GM12878 (cell line): ENCODE measurements at regions of chr12 and their contacts with region 1.

Region 1: DNA sequence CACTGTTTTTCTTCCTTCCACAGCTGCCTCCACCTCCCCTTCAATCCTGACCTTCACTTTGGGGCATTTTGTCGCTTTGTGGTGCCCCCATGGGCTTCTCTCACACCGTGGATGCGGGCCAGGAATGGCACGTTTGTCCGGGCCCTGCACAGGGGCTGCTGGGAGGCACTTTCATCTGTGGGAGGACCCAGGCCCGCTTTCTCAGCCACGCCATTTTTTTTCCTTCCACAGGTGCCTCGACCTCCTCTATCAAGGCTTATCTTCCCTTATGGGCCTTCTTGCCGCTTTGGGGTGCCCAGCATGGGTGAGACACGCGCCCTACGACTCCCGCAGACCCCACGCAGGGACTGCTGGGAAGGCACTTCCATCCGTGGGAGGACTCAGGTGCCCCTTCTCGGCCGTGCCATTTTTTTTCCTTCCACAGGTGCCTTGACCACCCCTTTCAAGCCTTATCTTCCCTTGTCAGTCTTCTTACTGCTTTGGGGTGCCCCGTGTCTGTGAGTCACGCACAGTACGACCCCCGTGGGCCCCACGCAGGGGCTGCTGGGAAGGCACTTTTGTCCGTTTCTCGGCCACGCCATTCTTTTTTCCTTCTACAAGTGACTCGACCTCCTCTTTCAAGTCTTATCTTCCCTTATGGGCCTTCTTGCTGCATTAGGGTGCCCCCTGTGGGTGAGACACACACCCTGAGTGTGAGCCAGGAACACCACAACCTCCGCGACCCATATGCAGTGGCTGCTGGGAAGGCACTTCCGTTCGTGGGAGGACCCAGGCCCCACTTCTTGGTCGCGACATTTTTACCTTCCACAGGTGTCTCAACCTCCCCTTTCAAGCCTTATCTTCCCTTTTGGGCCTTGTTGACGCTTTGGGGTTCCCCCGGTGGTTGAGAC is 270.7 kb downstream of the ALG10 start:
- DNase-seq: no peak
- ATAC-seq: no peak
- H3K4me3 ChIP-seq: no peak overlapping the region
- H3K27ac ChIP-seq: no peak overlapping the region
- H3K4me1 ChIP-seq: no peaks in the 10 kb centered on the region
- H3K27me3 ChIP-seq: no peaks in the 10 kb centered on the region
- CTCF ChIP-seq: no peak
- EP300 ChIP-seq: no peak
- POLR2A ChIP-seq: no peak
- RAD21 ChIP-seq: no peak

Region 2: DNA sequence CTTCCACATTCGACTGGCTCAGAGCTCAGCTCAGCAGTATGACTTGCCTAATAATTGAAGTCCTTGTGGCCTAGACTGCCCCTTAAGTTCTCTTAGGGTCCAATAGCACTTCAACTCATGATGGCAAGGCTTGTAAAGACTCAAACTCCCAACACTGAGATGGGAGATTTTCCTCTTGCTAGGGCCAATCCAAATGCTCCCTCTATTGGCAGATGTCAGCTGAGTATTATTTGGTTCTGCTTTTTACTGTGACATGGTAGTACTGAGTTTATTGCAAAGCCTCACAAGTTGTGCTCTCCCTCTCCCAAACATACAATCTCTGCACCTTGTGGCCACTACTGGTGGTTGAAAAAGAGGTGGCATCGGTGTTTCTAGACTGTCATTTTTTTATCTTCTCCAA is 106.5 kb before region 1 on chr12:
- CTCF ChIA-PET with region 1: no interaction called
- POLR2A ChIA-PET with region 1: no interaction called
- RAD21 ChIA-PET with region 1: no interaction called
- SMC1A ChIA-PET with region 1: no interaction called
- in situ Hi-C with region 1: loop called (anchors 25 kb)
- intact Hi-C with region 1: no loop called
- DNase-seq: no peak
- ATAC-seq: no peak
- H3K4me3 ChIP-seq: no peak overlapping the region
- H3K27ac ChIP-seq: no peak overlapping the region
- H3K4me1 ChIP-seq: no peaks in the 10 kb centered on the region
- H3K27me3 ChIP-seq: no peaks in the 10 kb centered on the region
- CTCF ChIP-seq: no peak
- EP300 ChIP-seq: no peak
- POLR2A ChIP-seq: no peak
- RAD21 ChIP-seq: no peak

Region 3: GRCh38 chr12:34303091-34303870 is 10.3 kb after region 1 on chr12:
- CTCF ChIA-PET with region 1: no interaction called
- POLR2A ChIA-PET with region 1: no interaction called
- RAD21 ChIA-PET with region 1: no interaction called
- SMC1A ChIA-PET with region 1: no interaction called
- in situ Hi-C with region 1: no loop called
- intact Hi-C with region 1: no loop called
- DNase-seq: no peak
- ATAC-seq: no peak
- H3K4me3 ChIP-seq: no peak overlapping the region
- H3K27ac ChIP-seq: no peak overlapping the region
- H3K4me1 ChIP-seq: no peaks in the 10 kb centered on the region
- H3K27me3 ChIP-seq: no peaks in the 10 kb centered on the region
- CTCF ChIP-seq: no peak
- EP300 ChIP-seq: no peak
- POLR2A ChIP-seq: no peak
- RAD21 ChIP-seq: no peak

Region 4: DNA sequence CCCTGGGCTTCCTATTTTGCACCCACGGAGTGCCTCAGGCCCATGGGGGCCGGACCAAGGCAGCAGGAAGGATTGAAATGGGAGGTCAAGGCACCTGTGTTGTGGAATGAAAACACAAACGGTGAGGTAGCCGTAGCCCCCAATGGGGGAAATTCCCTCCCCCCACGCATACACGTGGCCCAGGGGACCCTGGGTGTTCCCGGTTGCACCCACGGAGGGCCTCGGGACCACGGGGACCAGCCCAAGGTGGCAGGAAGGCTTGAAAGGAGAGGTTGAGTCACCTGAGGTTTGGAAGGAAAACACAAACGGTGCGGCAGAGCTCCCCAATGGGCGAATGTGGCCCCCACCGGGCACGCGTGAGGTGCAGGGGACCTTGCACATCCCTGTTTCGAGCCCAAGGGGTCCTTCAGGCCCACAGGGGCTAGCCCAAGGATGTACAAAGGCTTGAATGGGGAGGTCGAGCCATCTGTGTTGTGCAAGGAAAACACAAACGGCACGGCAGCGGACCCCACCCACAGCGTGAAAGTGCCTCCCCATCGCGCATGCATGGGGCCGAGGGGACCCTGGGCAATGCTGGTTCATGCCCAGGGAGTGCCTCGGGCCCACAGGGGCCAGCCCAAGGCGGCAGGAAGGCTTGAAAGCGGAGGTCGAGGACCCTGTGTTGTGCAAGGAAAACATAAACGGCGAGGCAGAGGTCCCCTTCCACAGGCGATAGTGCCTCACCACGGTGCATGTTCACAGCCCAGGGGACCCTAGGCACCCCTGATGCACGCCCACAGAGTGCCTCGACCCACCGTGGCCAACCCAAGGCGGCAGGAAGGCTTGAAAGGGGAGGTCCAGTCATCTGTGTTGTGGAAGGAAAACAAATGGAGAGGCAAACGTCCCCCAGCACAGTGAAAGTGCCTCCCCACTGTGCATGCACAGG is 106.0 kb after region 1 on chr12:
- CTCF ChIA-PET with region 1: no interaction called
- POLR2A ChIA-PET with region 1: no interaction called
- RAD21 ChIA-PET with region 1: no interaction called
- SMC1A ChIA-PET with region 1: no interaction called
- in situ Hi-C with region 1: loop called (anchors 25 kb)
- intact Hi-C with region 1: no loop called
- DNase-seq: no peak
- ATAC-seq: no peak
- H3K4me3 ChIP-seq: no peak overlapping the region
- H3K27ac ChIP-seq: no peak overlapping the region
- H3K4me1 ChIP-seq: no peaks in the 10 kb centered on the region
- H3K27me3 ChIP-seq: no peaks in the 10 kb centered on the region
- CTCF ChIP-seq: no peak
- EP300 ChIP-seq: no peak
- POLR2A ChIP-seq: no peak
- RAD21 ChIP-seq: no peak

Region 5: GRCh38 chr12:34595749-34596733 is 303.1 kb after region 1 on chr12:
- CTCF ChIA-PET with region 1: no interaction called
- POLR2A ChIA-PET with region 1: no interaction called
- RAD21 ChIA-PET with region 1: no interaction called
- SMC1A ChIA-PET with region 1: no interaction called
- in situ Hi-C with region 1: loop called (anchors 25 kb)
- intact Hi-C with region 1: no loop called
- DNase-seq: no peak
- ATAC-seq: no peak
- H3K4me3 ChIP-seq: no peak overlapping the region
- H3K27ac ChIP-seq: no peak overlapping the region
- H3K4me1 ChIP-seq: no peaks in the 10 kb centered on the region
- H3K27me3 ChIP-seq: no peaks in the 10 kb centered on the region
- CTCF ChIP-seq: no peak
- EP300 ChIP-seq: no peak
- POLR2A ChIP-seq: no peak
- RAD21 ChIP-seq: no peak